HepG2 (cell line): ENCODE measurements at regions of chr12 and their contacts with region 1.

Region 1: DNA sequence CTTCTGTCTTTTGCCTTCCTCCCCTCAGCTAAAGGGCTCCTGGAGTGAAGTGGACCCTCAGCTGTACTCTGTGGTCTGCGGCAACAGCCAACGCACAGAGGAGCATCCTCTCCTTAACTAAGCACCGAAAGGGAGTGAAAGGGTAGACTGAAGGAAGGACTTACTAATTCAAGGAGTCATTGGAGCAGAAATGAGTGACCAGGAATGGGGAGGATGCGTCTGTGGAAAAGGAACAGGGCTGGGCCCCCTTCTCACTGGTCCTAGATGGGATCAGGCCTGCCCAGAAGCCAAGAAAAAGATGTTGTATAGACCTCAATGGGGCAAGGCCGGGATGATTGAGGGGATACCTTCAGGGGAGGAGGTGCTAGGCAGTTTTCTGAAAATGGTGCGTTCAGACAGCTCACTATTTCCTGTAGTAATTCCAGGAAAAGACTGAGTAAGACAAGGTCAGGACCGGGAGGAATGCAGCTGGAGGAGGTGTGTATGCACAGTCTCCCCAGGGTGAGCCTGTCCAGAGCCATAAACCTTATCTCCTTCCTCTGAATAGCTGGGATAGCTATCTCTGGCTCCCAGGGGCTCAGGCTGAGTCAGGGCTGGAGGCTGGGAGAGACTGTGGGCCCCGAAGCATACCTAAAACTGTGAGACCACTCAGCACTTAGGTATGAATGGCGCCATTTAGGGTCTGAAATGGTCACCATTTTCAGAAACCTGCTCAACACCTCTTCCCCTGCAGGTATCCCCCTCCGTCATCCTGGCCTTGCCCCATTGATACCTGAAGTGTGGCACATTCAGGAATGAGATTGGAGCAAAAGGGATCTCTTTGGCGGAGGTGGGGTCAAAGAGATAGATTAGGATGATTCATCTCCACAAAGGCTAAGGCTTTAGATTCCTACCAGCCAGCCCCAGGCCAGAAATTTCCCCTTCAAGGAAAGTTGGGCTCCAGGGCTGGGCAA is 20.2 kb upstream of the KRT8 start:
- DNase-seq: peak; percentile 76
- ATAC-seq: peak; percentile 38
- H3K4me3 ChIP-seq: peak overlapping the region; percentile 38 to 60 (median 43); a peak in 5 of 6 replicates
- H3K27ac ChIP-seq: peak overlapping the region; percentile 99
- H3K4me1 ChIP-seq: peaks cover 84% of the 10 kb centered on the region
- H3K27me3 ChIP-seq: no peaks in the 10 kb centered on the region
- CTCF ChIP-seq: no peak
- EP300 ChIP-seq: no peak; a peak in 1 of 4 replicates
- POLR2A ChIP-seq: no peak
- RAD21 ChIP-seq: no peak

Region 2: GRCh38 chr12:52884526-52885293 is 40.3 kb before region 1 on chr12:
- CTCF ChIA-PET with region 1: interaction called, 17 read pairs
- POLR2A ChIA-PET with region 1: interaction called, 26 read pairs
- in situ Hi-C with region 1: no loop called
- intact Hi-C with region 1: no loop called
- DNase-seq: peak; percentile 97
- ATAC-seq: peak; percentile 80
- H3K4me3 ChIP-seq: peak overlapping the region in 2 of 3 experiments; percentile 29 to 42; a peak in 1 of 6 replicates
- H3K27ac ChIP-seq: peak overlapping the region; percentile 86
- H3K4me1 ChIP-seq: peaks cover 60% of the 10 kb centered on the region
- H3K27me3 ChIP-seq: no peaks in the 10 kb centered on the region
- CTCF ChIP-seq: peak; percentile 96
- EP300 ChIP-seq: peak; percentile 65 to 93; a peak in 2 of 4 replicates
- POLR2A ChIP-seq: no peak; a peak in 1 of 4 replicates
- RAD21 ChIP-seq: peak; percentile 98

Region 3: GRCh38 chr12:52895061-52895887 is 29.8 kb before region 1 on chr12:
- CTCF ChIA-PET with region 1: no interaction called
- POLR2A ChIA-PET with region 1: interaction called, 60 read pairs
- in situ Hi-C with region 1: no loop called
- intact Hi-C with region 1: no loop called
- DNase-seq: peak; percentile 92
- ATAC-seq: peak; percentile 71
- H3K4me3 ChIP-seq: no peak overlapping the region
- H3K27ac ChIP-seq: peak overlapping the region; percentile 36
- H3K4me1 ChIP-seq: peaks cover 46% of the 10 kb centered on the region
- H3K27me3 ChIP-seq: no peaks in the 10 kb centered on the region
- CTCF ChIP-seq: no peak
- EP300 ChIP-seq: peak in 1 of 2 experiments; percentile 80; a peak in 2 of 4 replicates
- POLR2A ChIP-seq: no peak; a peak in 2 of 4 replicates
- RAD21 ChIP-seq: no peak

Region 4: GRCh38 chr12:52913076-52913821 is 11.8 kb before region 1 on chr12:
- CTCF ChIA-PET with region 1: no interaction called
- POLR2A ChIA-PET with region 1: interaction called, 465 read pairs
- in situ Hi-C with region 1: no loop called
- intact Hi-C with region 1: loop called (anchors 1 kb)
- DNase-seq: no peak
- ATAC-seq: peak; percentile 55
- H3K4me3 ChIP-seq: no peak overlapping the region; a peak in 1 of 6 replicates
- H3K27ac ChIP-seq: no peak overlapping the region
- H3K4me1 ChIP-seq: peaks cover 85% of the 10 kb centered on the region
- H3K27me3 ChIP-seq: no peaks in the 10 kb centered on the region
- CTCF ChIP-seq: no peak
- EP300 ChIP-seq: no peak
- POLR2A ChIP-seq: no peak
- RAD21 ChIP-seq: no peak

Region 5: GRCh38 chr12:52949413-52950331 is 24.6 kb after region 1 on chr12:
- CTCF ChIA-PET with region 1: no interaction called
- POLR2A ChIA-PET with region 1: interaction called, 347 read pairs
- in situ Hi-C with region 1: no loop called
- intact Hi-C with region 1: loop called (anchors 1 kb)
- DNase-seq: peak; percentile 98
- ATAC-seq: peak; percentile 83
- H3K4me3 ChIP-seq: peak overlapping the region; percentile 88 to 100 (median 99)
- H3K27ac ChIP-seq: peak overlapping the region; percentile 100
- H3K4me1 ChIP-seq: peaks cover 68% of the 10 kb centered on the region
- H3K27me3 ChIP-seq: peaks cover 0 to 2% of the 10 kb centered on the region in 2 experiments; a peak in 1 of 5 replicates
- CTCF ChIP-seq: peak; percentile 42; the same call in 1 of the 2 replicates
- EP300 ChIP-seq: peak in 1 of 2 experiments; percentile 90; a peak in 2 of 4 replicates
- POLR2A ChIP-seq: peak; percentile 82 to 96
- RAD21 ChIP-seq: peak; percentile 81

Region 6: GRCh38 chr12:53005986-53006809 is 81.2 kb after region 1 on chr12 and contains the start of gene EIF4B:
- CTCF ChIA-PET with region 1: no interaction called
- POLR2A ChIA-PET with region 1: interaction called, 13 read pairs
- in situ Hi-C with region 1: no loop called
- intact Hi-C with region 1: no loop called
- DNase-seq: peak; percentile 97
- ATAC-seq: peak; percentile 96
- H3K4me3 ChIP-seq: peak within 1 kb of the TSS; percentile 89 to 93 (median 92)
- H3K27ac ChIP-seq: peak within 1 kb of the TSS; percentile 99
- H3K4me1 ChIP-seq: peaks cover 47% of the 10 kb centered on the region
- H3K27me3 ChIP-seq: no peaks in the 10 kb centered on the region; a peak in 1 of 5 replicates
- CTCF ChIP-seq: peak; percentile 22; the same call in 1 of the 2 replicates
- EP300 ChIP-seq: no peak; a peak in 2 of 4 replicates
- POLR2A ChIP-seq: peak; percentile 52 to 70; a peak in 3 of 4 replicates
- RAD21 ChIP-seq: no peak
- total RNA-seq, gene EIF4B: 548 and 779 TPM in 2 replicates